ENCODE measurements at regions of chr1 and their contacts with region 1.

Region 1: GRCh38 chr1:35030756-35031446 is 844 bp downstream of the ZMYM6 start:
- DNase-seq: peak; percentile 20 to 23
- H3K4me3 ChIP-seq: peak overlapping the region; percentile 56 to 98 (median 63)
- H3K27ac ChIP-seq: peak overlapping the region; percentile 94 to 99 (median 97)
- H3K4me1 ChIP-seq: peaks cover 0 to 20% of the 10 kb centered on the region in 2 donors
- H3K27me3 ChIP-seq: no peaks in the 10 kb centered on the region
- CTCF ChIP-seq: no peak
- POLR2A ChIP-seq: no peak

Region 2: GRCh38 chr1:35192853-35193664 is 162.2 kb after region 1 on chr1 and contains the start of gene SFPQ:
- intact Hi-C with region 1: loop called (anchors 5 kb)
- DNase-seq: peak; percentile 98
- H3K4me3 ChIP-seq: peak within 1 kb of the TSS; percentile 94 to 100 (median 98)
- H3K27ac ChIP-seq: peak within 1 kb of the TSS; percentile 92 to 99 (median 98)
- H3K4me1 ChIP-seq: peaks cover 21 to 22% of the 10 kb centered on the region in 2 donors
- H3K27me3 ChIP-seq: no peaks in the 10 kb centered on the region
- CTCF ChIP-seq: no peak
- POLR2A ChIP-seq: peak; percentile 79 to 97
- total RNA-seq, gene SFPQ: 178 to 299 (median 239) TPM

Measured in thyroid gland (tissue), 4 donors.